B cell (primary cell): ENCODE measurements at regions of chr10 and their contacts with region 1.

Region 1: GRCh38 chr10:102420810-102421644 is at the start of gene FBXL15:
- DNase-seq: peak; percentile 98
- ATAC-seq: peak; percentile 78
- H3K4me3 ChIP-seq: peak within 1 kb of the TSS; percentile 63 to 92 (median 89)
- H3K4me3 Mint-ChIP-seq: peak within 1 kb of the TSS; percentile 99
- H3K27ac ChIP-seq: peak within 1 kb of the TSS; percentile 39 to 62
- H3K27ac Mint-ChIP-seq: peak within 1 kb of the TSS; percentile 99
- H3K4me1 ChIP-seq: peaks cover 32 to 34% of the 10 kb centered on the region in 2 donors
- H3K4me1 Mint-ChIP-seq: peaks cover 38% of the 10 kb centered on the region
- H3K27me3 ChIP-seq: peaks cover 0 to 33% (median 21%) of the 10 kb centered on the region in 4 experiments
- H3K27me3 Mint-ChIP-seq: peaks cover 16% of the 10 kb centered on the region
- CTCF ChIP-seq: no peak
- total RNA-seq, gene FBXL15: 15.5 and 17.0 TPM in 2 replicates

Region 2: GRCh38 chr10:101660256-101660655 is 760.8 kb before region 1 on chr10:
- CTCF ChIA-PET with region 1: no interaction called
- POLR2A ChIA-PET with region 1: no interaction called
- intact Hi-C with region 1: no loop called
- DNase-seq: no peak
- ATAC-seq: no peak
- H3K4me3 ChIP-seq: no peak overlapping the region
- H3K4me3 Mint-ChIP-seq: no peak overlapping the region
- H3K27ac ChIP-seq: no peak overlapping the region
- H3K27ac Mint-ChIP-seq: no peak overlapping the region
- H3K4me1 ChIP-seq: no peaks in the 10 kb centered on the region
- H3K4me1 Mint-ChIP-seq: no peaks in the 10 kb centered on the region
- H3K27me3 ChIP-seq: no peaks in the 10 kb centered on the region
- H3K27me3 Mint-ChIP-seq: no peaks in the 10 kb centered on the region
- CTCF ChIP-seq: no peak

Region 3: GRCh38 chr10:102132563-102133372 is 288.3 kb before region 1 on chr10 and contains the start of gene PPRC1:
- CTCF ChIA-PET with region 1: no interaction called
- POLR2A ChIA-PET with region 1: no interaction called
- intact Hi-C with region 1: loop called (anchors 5 kb)
- DNase-seq: peak; percentile 98
- ATAC-seq: peak; percentile 94
- H3K4me3 ChIP-seq: peak within 1 kb of the TSS; percentile 70 to 97 (median 82)
- H3K4me3 Mint-ChIP-seq: peak within 1 kb of the TSS; percentile 94
- H3K27ac ChIP-seq: peak within 1 kb of the TSS; percentile 79 to 88
- H3K27ac Mint-ChIP-seq: peak within 1 kb of the TSS; percentile 94
- H3K4me1 ChIP-seq: peaks cover 18 to 25% of the 10 kb centered on the region in 2 donors
- H3K4me1 Mint-ChIP-seq: peaks cover 36% of the 10 kb centered on the region
- H3K27me3 ChIP-seq: no peaks in the 10 kb centered on the region
- H3K27me3 Mint-ChIP-seq: no peaks in the 10 kb centered on the region
- CTCF ChIP-seq: peak; percentile 96
- total RNA-seq, gene PPRC1: 35.3 and 36.3 TPM in 2 replicates

Region 4: DNA sequence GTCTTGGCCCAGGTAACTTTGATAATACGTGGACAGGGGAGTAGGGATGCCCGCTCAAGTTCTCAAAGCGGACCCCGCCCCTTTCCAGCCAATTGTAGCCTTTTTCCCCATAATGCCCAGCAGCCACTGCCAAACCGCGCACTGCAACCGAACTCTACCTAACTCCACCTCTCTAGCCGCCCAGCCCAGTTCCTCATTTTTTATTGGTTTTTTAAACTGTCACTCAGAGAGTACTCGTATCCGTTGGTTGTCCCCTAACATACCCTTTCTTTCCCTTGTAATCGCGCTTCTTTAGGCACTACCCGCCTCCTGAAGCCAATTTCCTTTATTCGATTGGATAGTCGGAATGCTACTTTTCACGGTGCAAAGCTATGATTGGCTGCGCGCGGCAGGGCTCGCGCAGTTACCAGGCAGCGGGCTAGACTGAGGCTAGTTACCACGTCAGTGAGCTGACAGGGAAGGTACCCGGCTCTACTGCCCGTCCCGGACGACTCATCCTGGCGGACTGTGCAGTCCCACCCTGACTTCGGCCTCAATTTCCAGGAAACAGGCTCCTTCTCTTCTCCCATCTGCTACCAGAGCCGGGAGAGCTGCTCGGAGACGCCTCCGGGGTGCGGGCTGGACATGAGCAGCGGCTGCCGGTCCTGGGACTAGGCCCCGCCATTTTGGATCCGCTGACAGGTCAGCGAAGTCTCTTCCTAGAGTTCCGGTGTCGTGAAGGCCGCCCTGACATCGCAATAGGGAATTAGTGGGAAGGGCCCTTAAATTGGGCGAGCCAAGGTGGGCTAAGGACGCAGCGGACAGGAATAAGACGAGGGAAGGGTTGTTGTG is 175.7 kb before region 1 on chr10 and contains the start of gene GBF1:
- CTCF ChIA-PET with region 1: no interaction called
- POLR2A ChIA-PET with region 1: no interaction called
- intact Hi-C with region 1: loop called (anchors 1 kb)
- DNase-seq: peak; percentile 98
- ATAC-seq: peak; percentile 86
- H3K4me3 ChIP-seq: peak within 1 kb of the TSS; percentile 80 to 99 (median 98)
- H3K4me3 Mint-ChIP-seq: peak within 1 kb of the TSS; percentile 94
- H3K27ac ChIP-seq: peak within 1 kb of the TSS; percentile 86 to 90
- H3K27ac Mint-ChIP-seq: peak within 1 kb of the TSS; percentile 38
- H3K4me1 ChIP-seq: peaks cover 50 to 51% of the 10 kb centered on the region in 2 donors
- H3K4me1 Mint-ChIP-seq: peaks cover 56% of the 10 kb centered on the region
- H3K27me3 ChIP-seq: peaks cover 0 to 31% (median 27%) of the 10 kb centered on the region in 4 experiments
- H3K27me3 Mint-ChIP-seq: peaks cover 23% of the 10 kb centered on the region
- CTCF ChIP-seq: no peak
- total RNA-seq, gene GBF1: 39.3 and 41.2 TPM in 2 replicates

Region 5: GRCh38 chr10:102399217-102400089 is 21.6 kb before region 1 on chr10:
- CTCF ChIA-PET with region 1: interaction called, 108 read pairs
- POLR2A ChIA-PET with region 1: interaction called, 38 read pairs
- intact Hi-C with region 1: loop called (anchors 1 kb)
- DNase-seq: peak; percentile 94
- ATAC-seq: peak; percentile 39
- H3K4me3 ChIP-seq: peak overlapping the region in 4 of 5 experiments; percentile 29 to 53 (median 49)
- H3K4me3 Mint-ChIP-seq: peak overlapping the region; percentile 95
- H3K27ac ChIP-seq: peak overlapping the region; percentile 74 to 80
- H3K27ac Mint-ChIP-seq: peak overlapping the region; percentile 92
- H3K4me1 ChIP-seq: peaks cover 36 to 46% of the 10 kb centered on the region in 2 donors
- H3K4me1 Mint-ChIP-seq: peaks cover 46% of the 10 kb centered on the region
- H3K27me3 ChIP-seq: no peaks in the 10 kb centered on the region
- H3K27me3 Mint-ChIP-seq: no peaks in the 10 kb centered on the region
- CTCF ChIP-seq: peak; percentile 94

Region 6: DNA sequence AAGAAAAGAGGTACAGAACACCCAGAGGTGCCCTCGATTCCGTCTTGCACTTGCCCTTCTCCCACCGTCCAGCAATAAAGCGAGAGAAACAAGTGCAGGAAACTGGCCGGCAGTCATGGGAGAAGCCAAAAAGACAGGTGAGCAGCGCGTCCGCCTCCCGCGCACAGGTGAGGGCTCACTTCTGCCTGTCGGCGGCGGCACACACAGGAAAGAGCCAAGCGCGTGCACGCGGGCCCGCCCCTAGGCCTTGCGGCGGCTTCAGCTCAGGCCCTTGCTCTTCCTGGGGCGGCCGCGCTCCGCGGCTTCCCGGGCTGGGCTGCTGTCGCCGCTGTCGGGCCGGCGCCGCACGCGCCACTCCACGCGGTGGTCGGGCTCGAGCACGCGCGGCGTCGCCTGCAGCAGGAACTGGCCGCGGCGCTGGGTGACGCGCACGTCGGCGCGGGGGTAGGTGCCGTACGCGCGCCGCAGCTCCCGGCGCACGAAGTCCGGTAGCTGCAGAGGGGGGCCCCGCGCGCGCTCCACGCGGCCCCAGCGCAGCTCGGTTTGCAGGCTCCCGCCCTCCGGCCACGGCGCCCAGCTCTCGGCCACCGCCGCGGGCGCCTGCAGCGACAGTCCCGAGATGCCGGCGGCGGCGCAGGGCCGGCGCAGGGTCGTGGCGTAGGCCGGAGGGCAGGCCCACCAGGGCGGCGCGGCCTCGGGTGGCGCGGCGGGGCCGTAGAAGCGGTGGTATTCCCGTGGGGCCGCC is 29.3 kb after region 1 on chr10:
- CTCF ChIA-PET with region 1: interaction called, 31 read pairs
- POLR2A ChIA-PET with region 1: interaction called, 18 read pairs
- intact Hi-C with region 1: loop called (anchors 1 kb)
- DNase-seq: peak; percentile 96
- ATAC-seq: peak; percentile 79
- H3K4me3 ChIP-seq: peak overlapping the region; percentile 75 to 97 (median 87)
- H3K4me3 Mint-ChIP-seq: peak overlapping the region; percentile 97
- H3K27ac ChIP-seq: peak overlapping the region; percentile 81 to 86
- H3K27ac Mint-ChIP-seq: peak overlapping the region; percentile 97
- H3K4me1 ChIP-seq: peaks cover 12 to 15% of the 10 kb centered on the region in 2 donors
- H3K4me1 Mint-ChIP-seq: peaks cover 19% of the 10 kb centered on the region
- H3K27me3 ChIP-seq: no peaks in the 10 kb centered on the region
- H3K27me3 Mint-ChIP-seq: no peaks in the 10 kb centered on the region
- CTCF ChIP-seq: no peak

Region 7: DNA sequence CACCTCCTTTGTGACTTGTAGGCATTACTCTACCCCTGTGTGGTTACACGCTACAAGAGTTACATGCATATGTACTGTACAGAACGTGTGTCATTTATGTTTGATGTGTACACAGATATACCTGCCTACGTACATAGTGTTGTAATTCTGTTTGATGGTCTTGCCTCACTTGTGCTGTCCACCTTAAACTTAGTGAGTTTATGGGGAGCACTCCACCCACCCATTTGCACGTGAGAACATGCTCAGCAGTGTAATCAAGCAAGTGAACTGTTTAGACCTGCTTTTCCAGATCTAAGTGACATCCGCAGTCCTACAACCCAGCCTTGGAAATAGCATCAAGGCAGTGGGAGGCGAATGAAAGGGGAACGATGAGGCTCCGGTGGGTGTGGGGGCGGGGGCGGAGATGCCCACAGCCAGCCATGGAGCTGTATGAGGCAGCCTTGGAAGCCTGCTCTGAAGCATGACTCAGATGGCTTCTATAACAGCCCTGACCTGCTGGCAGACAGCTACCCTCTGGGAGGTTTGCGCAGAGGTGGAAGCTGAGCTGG is 134.8 kb after region 1 on chr10:
- CTCF ChIA-PET with region 1: no interaction called
- POLR2A ChIA-PET with region 1: no interaction called
- intact Hi-C with region 1: no loop called
- DNase-seq: no peak
- ATAC-seq: no peak
- H3K4me3 ChIP-seq: no peak overlapping the region
- H3K4me3 Mint-ChIP-seq: no peak overlapping the region
- H3K27ac ChIP-seq: no peak overlapping the region
- H3K27ac Mint-ChIP-seq: no peak overlapping the region
- H3K4me1 ChIP-seq: no peaks in the 10 kb centered on the region
- H3K4me1 Mint-ChIP-seq: no peaks in the 10 kb centered on the region
- H3K27me3 ChIP-seq: no peaks in the 10 kb centered on the region
- H3K27me3 Mint-ChIP-seq: no peaks in the 10 kb centered on the region
- CTCF ChIP-seq: no peak

Region 8: DNA sequence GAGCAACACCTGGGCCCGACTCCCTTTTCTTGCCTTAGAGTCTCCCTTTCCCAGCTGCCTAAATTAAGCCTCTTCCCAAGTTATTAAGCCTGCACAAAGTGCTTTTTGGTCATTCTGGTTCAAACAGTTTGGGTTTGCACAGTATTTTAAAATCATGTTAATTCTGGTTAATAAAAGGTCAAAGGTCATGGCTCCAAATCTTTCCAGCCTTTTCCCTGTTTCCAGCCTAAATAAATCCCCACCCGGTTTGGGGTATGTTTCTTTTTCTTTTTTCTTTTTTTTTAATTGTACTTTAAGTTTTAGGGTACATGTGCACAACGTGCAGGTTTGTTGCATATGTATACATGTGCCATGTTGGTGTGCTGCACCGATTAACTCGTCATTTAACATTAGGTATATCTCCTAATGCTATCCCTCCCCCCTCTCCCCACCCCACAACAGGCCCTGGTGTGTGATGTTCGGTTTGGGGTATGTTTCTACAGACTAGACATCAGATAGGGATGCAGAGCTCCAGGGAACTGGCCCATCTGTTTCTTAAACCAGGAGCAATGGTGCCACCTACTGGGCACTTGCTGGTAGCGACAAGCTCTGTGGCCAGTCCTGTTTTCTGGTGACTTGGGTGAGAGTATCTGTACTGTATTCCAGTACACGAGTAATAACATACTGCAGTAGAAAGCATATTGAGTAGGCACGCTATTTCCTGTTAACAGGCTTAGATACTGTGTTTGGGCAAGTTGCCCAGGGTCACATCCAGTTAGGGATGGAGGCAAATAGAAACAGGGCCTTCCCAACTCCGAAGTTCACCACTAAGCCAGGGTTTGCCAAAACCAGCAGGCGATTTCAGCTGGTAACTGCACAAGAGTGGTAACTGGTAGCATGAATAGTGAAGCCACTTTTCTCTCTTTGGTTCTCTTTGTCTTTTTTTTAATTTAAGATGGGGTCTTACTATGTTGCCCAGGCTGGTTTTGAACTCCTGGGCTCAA is 162.7 kb after region 1 on chr10:
- CTCF ChIA-PET with region 1: interaction called, 15 read pairs
- POLR2A ChIA-PET with region 1: no interaction called
- intact Hi-C with region 1: no loop called
- DNase-seq: peak; percentile 85
- ATAC-seq: peak; percentile 96
- H3K4me3 ChIP-seq: no peak overlapping the region
- H3K4me3 Mint-ChIP-seq: no peak overlapping the region
- H3K27ac ChIP-seq: no peak overlapping the region
- H3K27ac Mint-ChIP-seq: no peak overlapping the region
- H3K4me1 ChIP-seq: no peaks in the 10 kb centered on the region
- H3K4me1 Mint-ChIP-seq: peaks cover 2% of the 10 kb centered on the region
- H3K27me3 ChIP-seq: no peaks in the 10 kb centered on the region
- H3K27me3 Mint-ChIP-seq: no peaks in the 10 kb centered on the region
- CTCF ChIP-seq: peak; percentile 90